ENCODE measurements at regions of chr5 and their contacts with region 1.

Region 1: DNA sequence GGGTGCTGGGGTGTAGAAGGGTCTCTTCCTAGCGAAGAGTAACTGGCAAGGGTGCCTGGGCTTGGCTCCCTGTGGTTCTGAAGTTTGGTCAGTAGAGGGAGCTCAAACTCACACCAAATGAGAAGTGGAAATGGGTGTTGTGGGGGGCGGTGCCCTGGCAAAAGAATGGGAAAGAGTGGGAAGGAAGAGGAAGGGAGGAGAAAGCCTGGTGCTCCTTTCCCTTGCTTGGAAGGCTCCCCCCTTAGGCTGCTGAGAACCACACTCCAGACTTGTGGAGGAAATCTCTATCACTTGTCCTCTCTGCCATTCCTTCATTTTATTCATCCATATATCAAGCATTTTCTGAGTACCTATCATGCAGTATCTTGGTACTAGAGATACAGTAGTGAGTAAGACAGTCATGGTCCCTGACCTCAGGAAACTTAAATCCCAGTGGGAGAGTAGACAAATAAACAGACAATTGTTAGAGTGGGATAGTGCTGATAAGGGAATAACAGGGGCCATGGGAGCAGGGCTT is 13.0 kb downstream of the SLC4A9 start:
- DNase-seq: peak in 4 of 5 donors; percentile 22 to 38 (median 31)
- H3K4me3 ChIP-seq: no peak overlapping the region
- H3K4me3 Mint-ChIP-seq: no peak overlapping the region
- H3K27ac ChIP-seq: no peak overlapping the region
- H3K27ac Mint-ChIP-seq: peak overlapping the region in 1 of 7 donors; percentile 27
- H3K4me1 ChIP-seq: no peaks in the 10 kb centered on the region
- H3K4me1 Mint-ChIP-seq: peaks cover 0 to 7% (median 3%) of the 10 kb centered on the region in 4 donors
- H3K27me3 ChIP-seq: no peaks in the 10 kb centered on the region
- H3K27me3 Mint-ChIP-seq: no peaks in the 10 kb centered on the region

Region 2: GRCh38 chr5:140287801-140288521 is 85.1 kb before region 1 on chr5:
- CTCF ChIA-PET with region 1: no interaction called
- POLR2A ChIA-PET with region 1: no interaction called
- intact Hi-C with region 1: no loop called
- DNase-seq: no peak
- H3K4me3 ChIP-seq: no peak overlapping the region
- H3K4me3 Mint-ChIP-seq: no peak overlapping the region
- H3K27ac ChIP-seq: no peak overlapping the region
- H3K27ac Mint-ChIP-seq: no peak overlapping the region
- H3K4me1 ChIP-seq: peaks cover 8% of the 10 kb centered on the region
- H3K4me1 Mint-ChIP-seq: peaks cover 20 to 37% (median 33%) of the 10 kb centered on the region in 4 donors
- H3K27me3 ChIP-seq: no peaks in the 10 kb centered on the region
- H3K27me3 Mint-ChIP-seq: no peaks in the 10 kb centered on the region

Region 3: DNA sequence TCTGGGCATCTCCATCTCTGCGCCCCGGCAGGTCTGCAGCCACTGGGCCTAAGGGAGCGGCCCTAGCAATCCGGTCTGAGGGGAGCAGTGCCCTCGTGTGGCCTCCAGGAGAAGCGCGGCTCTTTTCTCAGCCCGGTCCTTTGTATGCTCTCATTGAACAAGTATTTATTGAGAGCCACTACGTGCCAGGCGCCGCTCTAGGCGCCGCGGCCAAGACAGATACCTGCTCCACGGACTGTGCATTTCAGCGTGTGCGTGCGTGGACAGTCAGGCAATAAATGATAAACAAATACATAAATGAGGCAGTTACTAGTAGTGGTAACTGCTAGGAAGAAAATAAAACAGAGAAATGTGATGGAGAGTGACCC is 15.3 kb before region 1 on chr5:
- CTCF ChIA-PET with region 1: interaction called, 15 read pairs
- POLR2A ChIA-PET with region 1: no interaction called
- intact Hi-C with region 1: no loop called
- DNase-seq: peak; percentile 66 to 73 (median 72)
- H3K4me3 ChIP-seq: peak overlapping the region in 1 of 2 donors; percentile 46
- H3K4me3 Mint-ChIP-seq: peak overlapping the region; percentile 76 to 91 (median 84)
- H3K27ac ChIP-seq: no peak overlapping the region
- H3K27ac Mint-ChIP-seq: peak overlapping the region in 6 of 7 donors; percentile 68 to 93 (median 82)
- H3K4me1 ChIP-seq: peaks cover 13% of the 10 kb centered on the region
- H3K4me1 Mint-ChIP-seq: peaks cover 9 to 17% (median 11%) of the 10 kb centered on the region in 4 donors
- H3K27me3 ChIP-seq: no peaks in the 10 kb centered on the region
- H3K27me3 Mint-ChIP-seq: peaks cover 0 to 2% of the 10 kb centered on the region in 2 donors

Region 4: GRCh38 chr5:140488914-140489313 is 115.9 kb after region 1 on chr5:
- CTCF ChIA-PET with region 1: interaction called, 11 read pairs
- POLR2A ChIA-PET with region 1: no interaction called
- intact Hi-C with region 1: no loop called
- DNase-seq: no peak
- H3K4me3 ChIP-seq: no peak overlapping the region
- H3K4me3 Mint-ChIP-seq: no peak overlapping the region
- H3K27ac ChIP-seq: no peak overlapping the region
- H3K27ac Mint-ChIP-seq: no peak overlapping the region
- H3K4me1 ChIP-seq: no peaks in the 10 kb centered on the region
- H3K4me1 Mint-ChIP-seq: peaks cover 0 to 6% (median 4%) of the 10 kb centered on the region in 4 donors
- H3K27me3 ChIP-seq: no peaks in the 10 kb centered on the region
- H3K27me3 Mint-ChIP-seq: no peaks in the 10 kb centered on the region

Region 5: GRCh38 chr5:140718241-140718580 is 345.2 kb after region 1 on chr5:
- CTCF ChIA-PET with region 1: interaction called, 89 read pairs
- POLR2A ChIA-PET with region 1: no interaction called
- intact Hi-C with region 1: loop called (anchors 1 kb)
- DNase-seq: no peak
- H3K4me3 ChIP-seq: no peak overlapping the region
- H3K4me3 Mint-ChIP-seq: peak overlapping the region in 2 of 8 donors; percentile 5 to 63
- H3K27ac ChIP-seq: no peak overlapping the region
- H3K27ac Mint-ChIP-seq: peak overlapping the region in 1 of 7 donors; percentile 46
- H3K4me1 ChIP-seq: no peaks in the 10 kb centered on the region
- H3K4me1 Mint-ChIP-seq: peaks cover under 1 to 2% (median 1%) of the 10 kb centered on the region in 4 donors
- H3K27me3 ChIP-seq: no peaks in the 10 kb centered on the region
- H3K27me3 Mint-ChIP-seq: no peaks in the 10 kb centered on the region